ENCODE measurements at regions of chr3 and their contacts with region 1.

Region 1: DNA sequence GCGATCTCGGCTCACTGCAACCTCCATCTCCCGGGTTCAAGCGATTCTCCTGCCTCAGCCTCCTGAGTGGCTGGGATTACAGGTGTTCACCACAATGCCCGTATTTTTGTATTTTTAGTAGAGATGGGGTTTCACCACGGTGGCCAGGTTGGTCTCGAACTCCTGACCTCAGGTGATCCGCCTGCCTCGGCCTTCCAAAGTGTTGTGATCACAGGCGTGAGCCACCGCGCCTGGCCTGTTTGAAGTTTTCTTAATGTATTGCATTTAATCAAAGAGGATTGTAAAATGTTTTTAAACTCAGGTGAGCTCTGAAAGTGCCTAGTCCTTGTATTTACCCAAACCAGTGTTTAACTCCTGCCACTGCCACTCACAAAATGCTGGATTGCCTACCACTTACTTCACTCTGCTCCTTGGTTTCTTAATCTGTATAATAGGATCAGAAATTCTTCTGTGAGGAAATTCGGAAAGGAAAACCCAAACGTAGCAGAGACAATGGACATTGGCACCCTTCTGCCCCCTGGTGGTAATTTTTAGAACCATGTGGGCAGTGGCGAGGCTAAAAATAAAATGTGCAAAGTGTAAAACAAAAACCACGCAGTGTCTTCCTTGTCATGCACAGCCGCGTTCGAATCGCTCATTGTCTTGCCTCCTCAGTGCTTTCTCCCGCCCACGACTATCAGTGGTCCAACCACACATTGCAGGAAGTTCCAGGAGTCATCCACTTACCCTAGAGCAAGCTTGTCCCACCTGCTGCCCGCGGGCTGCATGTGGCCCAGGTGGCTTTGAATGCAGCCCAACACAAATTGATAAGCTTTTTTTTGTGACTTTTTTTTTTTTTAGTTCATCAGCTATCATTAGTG is 27.3 kb downstream of the CEP19 start:
- DNase-seq: peak; percentile 30 to 83 (median 68)
- ATAC-seq: peak; percentile 82
- H3K4me3 ChIP-seq: peak overlapping the region; percentile 11 to 37
- H3K4me3 Mint-ChIP-seq: peak overlapping the region; percentile 67
- H3K27ac ChIP-seq: peak overlapping the region in 1 of 2 experiments; percentile 61
- H3K27ac Mint-ChIP-seq: peak overlapping the region; percentile 34
- H3K4me1 ChIP-seq: peaks cover 13% of the 10 kb centered on the region
- H3K4me1 Mint-ChIP-seq: peaks cover 10% of the 10 kb centered on the region
- H3K27me3 ChIP-seq: no peaks in the 10 kb centered on the region
- H3K27me3 Mint-ChIP-seq: no peaks in the 10 kb centered on the region
- CTCF ChIP-seq: peak; percentile 95

Region 2: GRCh38 chr3:196537319-196537984 is 147.3 kb before region 1 on chr3:
- CTCF ChIA-PET with region 1: no interaction called
- POLR2A ChIA-PET with region 1: no interaction called
- intact Hi-C with region 1: loop called in 1 of 2 experiments (anchors 5 kb)
- DNase-seq: peak in 8 of 9 experiments; percentile 42 to 77 (median 66)
- ATAC-seq: no peak
- H3K4me3 ChIP-seq: no peak overlapping the region
- H3K4me3 Mint-ChIP-seq: no peak overlapping the region
- H3K27ac ChIP-seq: no peak overlapping the region
- H3K27ac Mint-ChIP-seq: no peak overlapping the region
- H3K4me1 ChIP-seq: no peaks in the 10 kb centered on the region
- H3K4me1 Mint-ChIP-seq: no peaks in the 10 kb centered on the region
- H3K27me3 ChIP-seq: peaks cover 0 to 2% of the 10 kb centered on the region in 2 experiments
- H3K27me3 Mint-ChIP-seq: peaks cover 10% of the 10 kb centered on the region
- CTCF ChIP-seq: peak; percentile 67

Region 3: GRCh38 chr3:196603683-196604082 is 81.1 kb before region 1 on chr3:
- CTCF ChIA-PET with region 1: interaction called, 235 read pairs
- POLR2A ChIA-PET with region 1: interaction called, 7 read pairs
- intact Hi-C with region 1: no loop called
- DNase-seq: peak in 1 of 9 experiments; percentile 25
- ATAC-seq: no peak
- H3K4me3 ChIP-seq: no peak overlapping the region
- H3K4me3 Mint-ChIP-seq: no peak overlapping the region
- H3K27ac ChIP-seq: no peak overlapping the region
- H3K27ac Mint-ChIP-seq: no peak overlapping the region
- H3K4me1 ChIP-seq: peaks cover 3% of the 10 kb centered on the region
- H3K4me1 Mint-ChIP-seq: peaks cover 18% of the 10 kb centered on the region
- H3K27me3 ChIP-seq: no peaks in the 10 kb centered on the region
- H3K27me3 Mint-ChIP-seq: no peaks in the 10 kb centered on the region
- CTCF ChIP-seq: no peak

Region 4: GRCh38 chr3:196632046-196632751 is 52.6 kb before region 1 on chr3:
- CTCF ChIA-PET with region 1: interaction called, 23 read pairs
- POLR2A ChIA-PET with region 1: interaction called, 6 read pairs
- intact Hi-C with region 1: no loop called
- DNase-seq: peak; percentile 70 to 96 (median 89)
- ATAC-seq: peak; percentile 79
- H3K4me3 ChIP-seq: peak overlapping the region; percentile 46 to 50
- H3K4me3 Mint-ChIP-seq: peak overlapping the region; percentile 80
- H3K27ac ChIP-seq: peak overlapping the region; percentile 56 to 80
- H3K27ac Mint-ChIP-seq: peak overlapping the region; percentile 93
- H3K4me1 ChIP-seq: peaks cover 36% of the 10 kb centered on the region
- H3K4me1 Mint-ChIP-seq: peaks cover 51% of the 10 kb centered on the region
- H3K27me3 ChIP-seq: no peaks in the 10 kb centered on the region
- H3K27me3 Mint-ChIP-seq: no peaks in the 10 kb centered on the region
- CTCF ChIP-seq: no peak

Region 5: GRCh38 chr3:196639483-196640296 is 45.1 kb before region 1 on chr3 and contains the start of gene NRROS:
- CTCF ChIA-PET with region 1: interaction called, 15 read pairs
- POLR2A ChIA-PET with region 1: no interaction called
- intact Hi-C with region 1: loop called in 1 of 2 experiments (anchors 5 kb)
- DNase-seq: peak; percentile 18 to 79 (median 58)
- ATAC-seq: peak; percentile 41
- H3K4me3 ChIP-seq: peak within 1 kb of the TSS; percentile 62 to 88
- H3K4me3 Mint-ChIP-seq: peak within 1 kb of the TSS; percentile 70
- H3K27ac ChIP-seq: peak within 1 kb of the TSS; percentile 47 to 84
- H3K27ac Mint-ChIP-seq: peak within 1 kb of the TSS; percentile 84
- H3K4me1 ChIP-seq: peaks cover 48% of the 10 kb centered on the region
- H3K4me1 Mint-ChIP-seq: peaks cover 64% of the 10 kb centered on the region
- H3K27me3 ChIP-seq: no peaks in the 10 kb centered on the region
- H3K27me3 Mint-ChIP-seq: no peaks in the 10 kb centered on the region
- CTCF ChIP-seq: no peak
- total RNA-seq, gene NRROS: 4.6 to 5.7 TPM

Region 6: DNA sequence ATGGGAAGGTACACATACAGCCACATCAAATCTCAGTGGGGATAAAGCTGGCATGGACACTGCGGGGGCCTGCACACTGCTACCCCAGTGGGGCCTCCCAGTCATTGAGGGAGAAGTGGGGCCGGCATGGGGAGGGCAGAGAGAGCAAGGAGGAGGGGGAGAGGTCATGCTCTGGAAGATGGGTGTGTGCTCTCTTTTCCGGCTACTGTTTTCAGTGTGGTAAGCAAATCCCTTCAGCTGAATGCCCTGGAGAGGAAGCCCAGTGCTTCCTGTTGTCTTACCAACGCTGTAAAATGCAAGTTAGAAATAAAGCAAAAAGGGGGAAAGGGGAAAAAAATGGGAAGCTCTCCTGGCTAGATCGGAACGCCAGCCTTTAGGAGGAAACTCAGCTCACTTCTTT is 14.4 kb before region 1 on chr3:
- CTCF ChIA-PET with region 1: interaction called, 13 read pairs
- POLR2A ChIA-PET with region 1: no interaction called
- intact Hi-C with region 1: no loop called
- DNase-seq: no peak
- ATAC-seq: no peak
- H3K4me3 ChIP-seq: no peak overlapping the region
- H3K4me3 Mint-ChIP-seq: no peak overlapping the region
- H3K27ac ChIP-seq: no peak overlapping the region
- H3K27ac Mint-ChIP-seq: peak overlapping the region; percentile 74
- H3K4me1 ChIP-seq: peaks cover 3% of the 10 kb centered on the region
- H3K4me1 Mint-ChIP-seq: peaks cover 11% of the 10 kb centered on the region
- H3K27me3 ChIP-seq: no peaks in the 10 kb centered on the region
- H3K27me3 Mint-ChIP-seq: no peaks in the 10 kb centered on the region
- CTCF ChIP-seq: no peak

Region 7: DNA sequence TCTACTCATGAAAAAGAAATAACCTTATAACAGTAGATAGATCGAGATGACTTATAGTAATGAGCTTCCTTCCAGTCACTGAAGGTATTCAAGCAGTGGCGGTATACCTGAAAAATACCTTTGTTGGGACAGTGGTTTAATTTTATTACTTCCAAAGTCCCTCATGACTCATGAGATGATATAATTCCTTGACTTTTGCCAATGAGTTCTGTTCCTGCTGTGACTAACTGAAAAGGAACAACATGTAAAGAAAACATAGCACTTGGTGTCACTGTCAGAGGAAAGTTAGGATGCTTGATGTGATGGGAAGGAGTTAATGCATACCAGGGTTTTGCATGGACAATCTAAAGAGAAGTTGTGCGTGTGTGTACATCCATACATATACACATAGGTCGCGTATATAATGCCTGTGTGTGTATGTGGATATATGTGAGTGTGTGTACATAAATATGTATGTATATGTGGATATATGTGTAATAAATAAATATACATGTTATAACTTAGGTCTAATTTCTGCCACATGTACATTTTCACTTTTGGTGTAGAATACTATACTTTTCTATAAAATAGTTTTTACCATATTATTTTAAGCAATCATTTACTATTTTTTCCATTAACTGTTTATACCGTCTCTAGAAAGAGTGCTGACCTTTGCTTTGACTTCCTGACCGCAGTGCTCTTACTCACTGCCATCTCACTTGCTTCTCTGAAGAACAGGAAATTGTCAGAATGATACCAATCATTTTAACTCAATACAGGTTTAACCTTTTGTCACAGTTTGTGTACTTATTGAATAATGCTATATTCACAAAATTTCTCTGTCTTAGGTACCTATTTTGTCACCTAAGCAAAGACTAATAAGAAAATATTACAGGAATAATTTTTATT is 42.3 kb after region 1 on chr3:
- CTCF ChIA-PET with region 1: no interaction called
- POLR2A ChIA-PET with region 1: no interaction called
- intact Hi-C with region 1: no loop called
- DNase-seq: peak in 2 of 9 experiments; percentile 15 to 26
- ATAC-seq: peak; percentile 40
- H3K4me3 ChIP-seq: no peak overlapping the region
- H3K4me3 Mint-ChIP-seq: no peak overlapping the region
- H3K27ac ChIP-seq: no peak overlapping the region
- H3K27ac Mint-ChIP-seq: no peak overlapping the region
- H3K4me1 ChIP-seq: no peaks in the 10 kb centered on the region
- H3K4me1 Mint-ChIP-seq: peaks cover 8% of the 10 kb centered on the region
- H3K27me3 ChIP-seq: no peaks in the 10 kb centered on the region
- H3K27me3 Mint-ChIP-seq: no peaks in the 10 kb centered on the region
- CTCF ChIP-seq: no peak